ENCODE measurements at regions of chr17 and their contacts with region 1.

Region 1: GRCh38 chr17:44533533-44534246 is 23.6 kb upstream of the FZD2 start:
- DNase-seq: peak; percentile 90
- ATAC-seq: peak; percentile 96
- H3K4me3 Mint-ChIP-seq: no peak overlapping the region
- H3K27ac Mint-ChIP-seq: no peak overlapping the region
- H3K4me1 Mint-ChIP-seq: peaks cover 7% of the 10 kb centered on the region
- H3K27me3 Mint-ChIP-seq: peaks cover 8% of the 10 kb centered on the region

Region 2: DNA sequence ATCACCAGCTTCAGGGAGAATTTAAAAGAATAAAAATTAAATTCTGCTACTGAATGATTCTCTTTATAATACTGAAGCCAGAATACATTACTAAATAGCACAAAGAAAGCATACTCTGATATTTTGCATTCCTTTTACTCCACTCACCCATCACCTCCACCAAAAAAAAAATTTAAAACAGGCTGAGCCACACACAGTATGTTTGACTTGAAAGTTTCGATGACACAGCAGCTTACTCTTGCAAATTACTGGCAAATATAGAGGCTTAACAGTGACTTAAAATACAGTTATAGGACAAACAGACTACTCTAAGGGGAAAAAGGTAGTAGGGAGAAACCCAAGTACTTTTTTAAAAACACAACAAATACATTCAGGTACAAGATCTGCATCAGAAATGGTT is 69.7 kb before region 1 on chr17:
- CTCF ChIA-PET with region 1: no interaction called
- DNase-seq: no peak
- ATAC-seq: no peak
- H3K4me3 Mint-ChIP-seq: no peak overlapping the region
- H3K27ac Mint-ChIP-seq: no peak overlapping the region
- H3K4me1 Mint-ChIP-seq: peaks cover 12% of the 10 kb centered on the region
- H3K27me3 Mint-ChIP-seq: no peaks in the 10 kb centered on the region

Region 3: DNA sequence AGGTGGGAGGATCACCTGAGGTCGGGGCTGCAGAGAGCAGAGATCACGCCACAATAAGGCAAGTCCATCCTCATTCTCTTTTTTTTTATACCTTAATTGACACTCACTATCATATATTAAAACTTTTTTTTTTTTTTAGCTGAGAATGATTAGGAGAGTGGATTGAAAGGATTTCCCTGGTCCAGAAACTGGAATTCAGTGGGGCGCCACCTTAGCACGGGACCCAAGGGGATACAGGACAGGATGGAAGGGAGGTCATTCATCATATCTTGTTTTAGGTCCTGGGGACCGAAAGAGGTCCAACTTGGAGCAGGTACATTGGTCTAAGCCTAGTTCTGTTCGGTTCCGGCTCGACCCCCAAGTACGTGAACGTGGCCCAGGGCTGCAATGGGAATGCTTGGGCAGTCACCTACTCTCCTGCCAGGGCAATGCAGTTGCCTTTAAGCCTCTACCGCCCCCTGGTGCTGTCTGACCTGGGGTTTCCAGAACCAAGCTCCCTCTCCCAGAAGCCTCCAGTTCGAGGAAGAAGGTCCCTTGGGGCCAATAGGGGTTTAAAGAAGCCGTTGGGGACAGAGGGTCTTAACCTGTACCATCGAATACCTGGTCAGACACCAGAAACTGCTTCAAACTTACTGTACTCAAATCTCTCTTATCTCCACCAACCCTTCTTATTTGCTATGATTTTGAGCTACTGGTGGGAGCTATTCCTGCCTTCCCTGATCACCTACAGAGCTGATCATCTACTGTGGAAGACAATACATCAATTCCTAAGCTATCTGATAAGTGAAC is 10.6 kb before region 1 on chr17:
- CTCF ChIA-PET with region 1: interaction called, 24 read pairs
- DNase-seq: peak; percentile 77
- ATAC-seq: peak; percentile 68
- H3K4me3 Mint-ChIP-seq: no peak overlapping the region
- H3K27ac Mint-ChIP-seq: no peak overlapping the region
- H3K4me1 Mint-ChIP-seq: no peaks in the 10 kb centered on the region
- H3K27me3 Mint-ChIP-seq: peaks cover 8% of the 10 kb centered on the region

Region 4: GRCh38 chr17:44568945-44569858 is 35.5 kb after region 1 on chr17:
- CTCF ChIA-PET with region 1: no interaction called
- DNase-seq: no peak
- ATAC-seq: no peak
- H3K4me3 Mint-ChIP-seq: no peak overlapping the region
- H3K27ac Mint-ChIP-seq: no peak overlapping the region
- H3K4me1 Mint-ChIP-seq: no peaks in the 10 kb centered on the region
- H3K27me3 Mint-ChIP-seq: peaks cover 8% of the 10 kb centered on the region

Region 5: GRCh38 chr17:44672479-44673093 is 138.9 kb after region 1 on chr17:
- CTCF ChIA-PET with region 1: interaction called, 11 read pairs
- DNase-seq: no peak
- ATAC-seq: no peak
- H3K4me3 Mint-ChIP-seq: no peak overlapping the region
- H3K27ac Mint-ChIP-seq: no peak overlapping the region
- H3K4me1 Mint-ChIP-seq: no peaks in the 10 kb centered on the region
- H3K27me3 Mint-ChIP-seq: peaks cover 4% of the 10 kb centered on the region

Region 6: GRCh38 chr17:44689477-44690217 is 156.0 kb after region 1 on chr17 and contains the start of gene CCDC43:
- CTCF ChIA-PET with region 1: interaction called, 11 read pairs
- DNase-seq: peak; percentile 95
- ATAC-seq: peak; percentile 99
- H3K4me3 Mint-ChIP-seq: peak within 1 kb of the TSS; percentile 95
- H3K27ac Mint-ChIP-seq: peak within 1 kb of the TSS; percentile 87
- H3K4me1 Mint-ChIP-seq: peaks cover 34% of the 10 kb centered on the region
- H3K27me3 Mint-ChIP-seq: no peaks in the 10 kb centered on the region
- total RNA-seq, gene CCDC43: 26.0 to 28.4 TPM

Measured in activated CD8-positive, alpha-beta memory T cell treated with anti-CD3 and anti-CD28 coated beads, Interleukin-2, amount 10 ng/mL, durations not matched to agents 7 days and 5 days (primary cell).